Motor neuron (in vitro differentiated cells): ENCODE measurements at regions of chr12 and their contacts with region 1.

Region 1: GRCh38 chr12:56468216-56469006 is at the start of gene SPRYD4:
- ATAC-seq: peak; percentile 87 to 97 (median 94)
- H3K4me3 ChIP-seq: peak within 1 kb of the TSS; percentile 83 to 89 (median 86)
- H3K27ac ChIP-seq: peak within 1 kb of the TSS; percentile 85 to 87
- H3K4me1 ChIP-seq: peaks cover 6 to 11% of the 10 kb centered on the region in 2 donors
- total RNA-seq, gene SPRYD4: 1.3 to 8.5 (median 2.2) TPM

Region 2: DNA sequence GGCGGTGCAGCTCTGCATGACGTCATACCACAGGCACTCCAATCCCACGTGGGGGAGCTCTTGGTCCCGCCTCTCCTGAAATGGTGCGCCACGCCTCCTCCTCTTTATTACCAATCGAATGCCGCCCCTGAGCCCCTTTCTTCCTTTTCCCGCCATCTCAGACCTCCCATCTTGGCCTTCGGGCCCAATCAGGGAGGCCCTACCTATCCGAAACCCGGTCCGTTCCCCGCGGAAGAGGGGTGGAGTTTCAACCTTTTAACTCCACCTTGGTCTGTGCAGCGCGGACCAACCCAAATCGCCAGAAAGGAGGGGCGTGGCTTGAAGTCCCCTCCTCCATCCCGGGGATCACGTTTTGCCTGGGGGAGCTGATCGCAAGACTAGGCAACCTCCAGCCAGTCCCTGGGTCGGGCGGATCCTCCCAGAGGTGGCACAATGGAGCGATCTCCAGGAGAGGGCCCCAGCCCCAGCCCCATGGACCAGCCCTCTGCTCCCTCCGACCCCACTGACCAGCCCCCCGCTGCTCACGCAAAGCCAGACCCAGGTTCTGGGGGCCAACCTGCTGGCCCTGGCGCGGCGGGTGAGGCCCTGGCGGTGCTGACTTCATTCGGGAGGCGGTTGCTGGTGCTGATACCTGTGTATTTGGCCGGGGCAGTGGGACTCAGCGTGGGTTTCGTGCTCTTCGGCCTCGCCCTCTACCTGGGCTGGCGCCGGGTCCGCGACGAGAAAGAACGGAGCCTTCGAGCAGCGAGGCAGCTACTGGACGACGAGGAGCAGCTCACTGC is 340.3 kb before region 1 on chr12 and contains the start of gene ESYT1:
- in situ Hi-C with region 1: loop called in 1 of 9 experiments (anchors 10 kb)
- ATAC-seq: peak; percentile 84 to 96 (median 93)
- H3K4me3 ChIP-seq: peak within 1 kb of the TSS; percentile 55 to 73 (median 61)
- H3K27ac ChIP-seq: peak within 1 kb of the TSS; percentile 50 to 55
- H3K4me1 ChIP-seq: peaks cover 9 to 23% of the 10 kb centered on the region in 2 donors
- total RNA-seq, gene ESYT1: 13.4 to 54.6 (median 44.2) TPM

Region 3: GRCh38 chr12:56359851-56360767 is 108.3 kb before region 1 on chr12 and contains the start of gene STAT2:
- in situ Hi-C with region 1: loop called in 2 of 9 experiments (anchors 25 kb)
- ATAC-seq: peak; percentile 87 to 97 (median 96)
- H3K4me3 ChIP-seq: peak within 1 kb of the TSS; percentile 58 to 81 (median 65)
- H3K27ac ChIP-seq: peak within 1 kb of the TSS; percentile 53 to 64
- H3K4me1 ChIP-seq: peaks cover 3 to 14% of the 10 kb centered on the region in 2 donors
- total RNA-seq, gene STAT2: 26.5 to 458 (median 72.4) TPM

Region 4: GRCh38 chr12:56749359-56749758 is 280.9 kb after region 1 on chr12:
- in situ Hi-C with region 1: no loop called
- ATAC-seq: no peak
- H3K4me3 ChIP-seq: no peak overlapping the region
- H3K27ac ChIP-seq: no peak overlapping the region
- H3K4me1 ChIP-seq: peaks cover 5% of the 10 kb centered on the region in 2 donors

Region 5: DNA sequence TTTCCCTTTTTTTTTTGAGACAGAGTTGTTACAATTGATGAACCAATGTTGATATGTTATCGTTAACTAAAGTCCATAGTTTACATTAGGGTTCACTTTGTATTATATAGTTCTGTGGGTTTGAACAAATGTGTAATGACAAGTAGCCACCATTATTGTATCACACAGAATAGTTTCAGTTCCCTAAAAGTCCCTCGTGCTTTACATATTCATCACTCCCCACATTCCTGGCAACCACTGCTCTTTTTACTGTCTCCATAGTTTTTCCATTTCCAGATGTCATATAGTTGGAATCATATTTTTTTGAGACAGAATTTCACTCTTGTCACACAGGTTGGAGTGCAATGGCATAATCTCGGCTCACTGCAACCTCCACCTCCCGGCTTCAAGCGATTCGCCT is 307.2 kb after region 1 on chr12:
- in situ Hi-C with region 1: no loop called
- ATAC-seq: peak in 2 of 8 experiments; percentile 75 to 79
- H3K4me3 ChIP-seq: no peak overlapping the region
- H3K27ac ChIP-seq: no peak overlapping the region
- H3K4me1 ChIP-seq: no peaks in the 10 kb centered on the region